H1 (cell line): ENCODE measurements at regions of chr2 and their contacts with region 1.

Region 1: GRCh38 chr2:16756831-16757644 is 91.4 kb upstream of the CYRIA start:
- DNase-seq: peak; percentile 59 to 84
- H3K4me3 ChIP-seq: no peak overlapping the region
- H3K27ac ChIP-seq: no peak overlapping the region
- H3K4me1 ChIP-seq: no peaks in the 10 kb centered on the region
- H3K27me3 ChIP-seq: no peaks in the 10 kb centered on the region
- CTCF ChIP-seq: peak; percentile 78 to 95 (median 88)
- EP300 ChIP-seq: no peak
- POLR2A ChIP-seq: no peak
- RAD21 ChIP-seq: peak; percentile 97 to 99

Region 2: GRCh38 chr2:16553226-16553625 is 203.8 kb before region 1 on chr2:
- CTCF ChIA-PET with region 1: interaction called, 22 read pairs
- POLR2A ChIA-PET with region 1: no interaction called
- DNase-seq: peak in 1 of 2 experiments; percentile 51
- H3K4me3 ChIP-seq: no peak overlapping the region
- H3K27ac ChIP-seq: no peak overlapping the region
- H3K4me1 ChIP-seq: peaks cover 0 to 3% (median 0%) of the 10 kb centered on the region in 4 experiments; a peak in 1 of 7 replicates
- H3K27me3 ChIP-seq: no peaks in the 10 kb centered on the region
- CTCF ChIP-seq: peak; percentile 33 to 73 (median 67)
- EP300 ChIP-seq: no peak
- POLR2A ChIP-seq: no peak
- RAD21 ChIP-seq: peak; percentile 61 to 77

Region 3: GRCh38 chr2:16635791-16636699 is 121.0 kb before region 1 on chr2:
- CTCF ChIA-PET with region 1: interaction called, 11 read pairs
- POLR2A ChIA-PET with region 1: no interaction called
- DNase-seq: no peak
- H3K4me3 ChIP-seq: no peak overlapping the region
- H3K27ac ChIP-seq: no peak overlapping the region
- H3K4me1 ChIP-seq: no peaks in the 10 kb centered on the region; a peak in 2 of 7 replicates
- H3K27me3 ChIP-seq: no peaks in the 10 kb centered on the region
- CTCF ChIP-seq: no peak
- EP300 ChIP-seq: no peak
- POLR2A ChIP-seq: no peak
- RAD21 ChIP-seq: no peak

Region 4: GRCh38 chr2:16661936-16662839 is 94.8 kb before region 1 on chr2:
- CTCF ChIA-PET with region 1: interaction called, 13 read pairs
- POLR2A ChIA-PET with region 1: no interaction called
- DNase-seq: no peak
- H3K4me3 ChIP-seq: no peak overlapping the region
- H3K27ac ChIP-seq: no peak overlapping the region
- H3K4me1 ChIP-seq: peaks cover 0 to 9% (median 5%) of the 10 kb centered on the region in 4 experiments; a peak in 4 of 7 replicates
- H3K27me3 ChIP-seq: peaks cover 0 to 13% (median 12%) of the 10 kb centered on the region in 4 experiments; a peak in 6 of 7 replicates
- CTCF ChIP-seq: no peak
- EP300 ChIP-seq: no peak
- POLR2A ChIP-seq: no peak
- RAD21 ChIP-seq: no peak

Region 5: GRCh38 chr2:16745466-16745865 is 11.6 kb before region 1 on chr2:
- CTCF ChIA-PET with region 1: interaction called, 31 read pairs
- POLR2A ChIA-PET with region 1: no interaction called
- DNase-seq: no peak
- H3K4me3 ChIP-seq: no peak overlapping the region
- H3K27ac ChIP-seq: no peak overlapping the region
- H3K4me1 ChIP-seq: no peaks in the 10 kb centered on the region
- H3K27me3 ChIP-seq: peaks cover 0 to 1% (median 0%) of the 10 kb centered on the region in 4 experiments; a peak in 1 of 7 replicates
- CTCF ChIP-seq: no peak
- EP300 ChIP-seq: no peak
- POLR2A ChIP-seq: no peak
- RAD21 ChIP-seq: no peak